ENCODE measurements at regions of chr6 and their contacts with region 1.

Region 1: GRCh38 chr6:32153564-32154513 is at the start of gene PPT2:
- DNase-seq: peak; percentile 55
- H3K4me3 Mint-ChIP-seq: peak within 1 kb of the TSS; percentile 99
- H3K27ac Mint-ChIP-seq: peak within 1 kb of the TSS; percentile 86
- H3K4me1 Mint-ChIP-seq: peaks cover 40% of the 10 kb centered on the region
- H3K27me3 Mint-ChIP-seq: peaks cover 36% of the 10 kb centered on the region
- total RNA-seq, gene PPT2: 12.4 and 17.1 TPM in 2 replicates

Region 2: GRCh38 chr6:32047850-32048766 is 105.7 kb before region 1 on chr6:
- intact Hi-C with region 1: loop called (anchors 1 kb)
- DNase-seq: peak; percentile 52
- H3K4me3 Mint-ChIP-seq: no peak overlapping the region
- H3K27ac Mint-ChIP-seq: no peak overlapping the region
- H3K4me1 Mint-ChIP-seq: peaks cover 5% of the 10 kb centered on the region
- H3K27me3 Mint-ChIP-seq: peaks cover 2% of the 10 kb centered on the region

Region 3: GRCh38 chr6:32087574-32088486 is 66.0 kb before region 1 on chr6:
- intact Hi-C with region 1: loop called (anchors 1 kb)
- DNase-seq: peak; percentile 55
- H3K4me3 Mint-ChIP-seq: no peak overlapping the region
- H3K27ac Mint-ChIP-seq: no peak overlapping the region
- H3K4me1 Mint-ChIP-seq: peaks cover 11% of the 10 kb centered on the region
- H3K27me3 Mint-ChIP-seq: peaks cover 42% of the 10 kb centered on the region

Region 4: GRCh38 chr6:32118782-32119628 is 34.8 kb before region 1 on chr6:
- intact Hi-C with region 1: loop called (anchors 1 kb)
- DNase-seq: peak; percentile 62
- H3K4me3 Mint-ChIP-seq: no peak overlapping the region
- H3K27ac Mint-ChIP-seq: no peak overlapping the region
- H3K4me1 Mint-ChIP-seq: peaks cover 11% of the 10 kb centered on the region
- H3K27me3 Mint-ChIP-seq: no peaks in the 10 kb centered on the region

Region 5: DNA sequence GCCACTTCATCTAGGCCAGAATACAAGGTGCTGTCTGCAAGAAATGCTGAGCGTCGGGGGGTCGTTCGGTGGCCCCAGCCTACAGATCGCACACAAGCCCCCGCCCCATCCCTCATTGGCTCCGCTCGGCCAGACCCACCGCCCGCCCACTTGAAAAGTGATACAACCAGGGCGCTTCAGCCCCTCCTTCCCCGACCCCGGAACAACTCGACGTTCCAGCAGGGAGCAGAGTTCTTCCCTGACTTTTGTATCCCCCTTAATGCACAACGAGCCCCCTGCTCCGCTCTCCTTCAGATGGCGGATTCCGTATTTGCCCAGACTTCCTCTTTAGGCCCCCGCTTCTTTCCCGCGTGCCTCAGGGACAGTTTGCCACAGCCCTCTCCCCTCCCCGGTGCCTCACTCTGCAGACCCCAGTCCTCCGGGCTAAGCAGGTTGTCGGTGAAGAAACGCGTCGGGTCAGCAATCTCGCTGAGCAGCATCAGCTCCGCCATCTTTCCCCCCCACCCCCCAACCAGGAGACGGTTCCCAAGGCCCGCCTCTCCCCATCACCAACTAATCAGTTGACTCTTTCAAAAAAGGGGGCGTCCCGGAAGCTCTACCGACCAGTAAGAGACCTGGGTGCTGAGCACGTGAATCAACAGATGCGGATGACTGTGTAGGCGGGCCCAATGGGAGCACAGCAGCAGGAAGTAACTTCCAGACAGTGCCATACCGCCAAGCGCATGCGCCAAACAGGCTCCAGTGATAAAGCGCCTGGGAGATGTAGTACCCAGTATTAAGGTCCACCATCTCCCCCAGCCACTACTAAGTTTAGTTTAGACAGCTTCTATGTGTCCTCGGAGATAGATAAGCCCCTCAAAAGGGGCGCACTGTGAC is 25.9 kb before region 1 on chr6 and contains the start of gene ATF6B:
- intact Hi-C with region 1: loop called (anchors 1 kb)
- DNase-seq: peak; percentile 95
- H3K4me3 Mint-ChIP-seq: peak within 1 kb of the TSS; percentile 99
- H3K27ac Mint-ChIP-seq: peak within 1 kb of the TSS; percentile 94
- H3K4me1 Mint-ChIP-seq: peaks cover 45% of the 10 kb centered on the region
- H3K27me3 Mint-ChIP-seq: peaks cover 2% of the 10 kb centered on the region
- total RNA-seq, gene ATF6B: 80.1 and 97.6 TPM in 2 replicates

Region 6: GRCh38 chr6:32195652-32195901 is 41.7 kb after region 1 on chr6:
- intact Hi-C with region 1: loop called (anchors 1 kb)
- DNase-seq: peak; percentile 100
- H3K4me3 Mint-ChIP-seq: peak overlapping the region; percentile 97
- H3K27ac Mint-ChIP-seq: peak overlapping the region; percentile 98
- H3K4me1 Mint-ChIP-seq: peaks cover 48% of the 10 kb centered on the region
- H3K27me3 Mint-ChIP-seq: peaks cover 2% of the 10 kb centered on the region

Measured in activated T-helper 1 cell treated with anti-CD3 and anti-CD28 coated beads, Interleukin-12 subunit alpha, Interleukin-12 subunit beta, Interleukin-2, Interleukin-4 antibody, amounts not matched to agents 30 ng/mL and 10 ng/mL and 1 ng/mL, durations not matched to agents 14 hours and 24 hours and 36 hours (primary cell).